Activated CD4-positive, alpha-beta T cell treated with anti-CD3 and anti-CD28 coated beads for 36 hours (primary cell): ENCODE measurements at regions of chr2 and their contacts with region 1.

Region 1: DNA sequence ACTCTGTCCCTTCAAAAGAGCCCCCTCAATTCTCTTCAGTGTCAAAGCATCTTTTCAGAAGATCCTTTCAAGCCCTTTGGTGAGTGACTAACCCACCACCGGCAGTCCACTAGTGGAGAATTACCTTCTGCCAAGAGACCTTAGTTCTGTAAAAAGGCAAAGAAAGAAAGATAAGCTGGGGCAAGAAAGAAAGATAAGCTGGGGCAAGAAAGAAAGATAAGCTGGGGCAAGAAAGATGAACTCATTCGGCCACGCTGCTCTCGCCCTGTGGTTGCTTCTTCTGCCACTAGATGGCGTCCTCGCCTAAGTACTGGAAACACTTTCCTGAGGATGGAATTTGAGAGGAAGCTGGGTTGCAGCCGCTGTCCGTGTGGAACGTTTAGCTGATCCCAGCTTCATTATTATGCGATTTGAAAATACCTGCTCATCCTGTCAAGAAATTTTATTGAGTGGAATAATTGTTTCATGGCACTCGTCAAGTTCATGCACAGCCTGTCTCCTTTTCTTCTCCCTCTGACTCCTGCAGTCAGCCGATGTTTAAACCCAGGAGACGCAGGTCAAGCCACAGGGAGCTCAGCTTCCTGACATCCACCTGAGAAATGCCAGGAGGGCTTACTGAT is 17.3 kb upstream of the ANXA4 start:
- DNase-seq: peak; percentile 92
- ATAC-seq: peak; percentile 92
- H3K4me3 Mint-ChIP-seq: peak overlapping the region; percentile 47
- H3K27ac Mint-ChIP-seq: peak overlapping the region; percentile 20
- H3K4me1 Mint-ChIP-seq: peaks cover 4% of the 10 kb centered on the region
- H3K27me3 Mint-ChIP-seq: no peaks in the 10 kb centered on the region

Region 2: DNA sequence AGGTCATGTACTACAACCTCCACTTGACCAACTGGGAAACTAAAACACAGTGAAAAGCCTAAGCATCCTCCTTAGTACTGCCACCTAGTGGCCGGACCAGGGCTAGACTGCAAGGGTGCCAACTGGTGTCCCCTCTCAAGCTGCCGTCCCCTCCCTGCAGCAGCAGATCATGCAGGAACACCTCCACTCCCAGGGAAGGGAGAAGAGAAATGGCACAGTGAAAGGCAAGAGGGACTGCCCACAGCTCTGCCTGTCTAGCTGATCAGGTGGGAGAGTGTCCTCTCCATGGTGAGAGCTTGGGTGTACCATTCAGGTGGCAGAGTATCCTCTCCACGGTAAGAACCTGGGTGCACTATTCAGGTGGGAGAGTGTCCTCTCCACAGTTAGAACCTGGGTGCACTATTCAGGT is 159.2 kb before region 1 on chr2:
- CTCF ChIA-PET with region 1: interaction called, 17 read pairs
- POLR2A ChIA-PET with region 1: no interaction called
- intact Hi-C with region 1: no loop called
- DNase-seq: peak; percentile 83
- ATAC-seq: peak; percentile 78
- H3K4me3 Mint-ChIP-seq: no peak overlapping the region
- H3K27ac Mint-ChIP-seq: peak overlapping the region; percentile 52
- H3K4me1 Mint-ChIP-seq: peaks cover 93% of the 10 kb centered on the region
- H3K27me3 Mint-ChIP-seq: no peaks in the 10 kb centered on the region

Region 3: GRCh38 chr2:69770193-69771146 is 45.8 kb after region 1 on chr2:
- CTCF ChIA-PET with region 1: interaction called, 11 read pairs
- POLR2A ChIA-PET with region 1: no interaction called
- intact Hi-C with region 1: no loop called
- DNase-seq: peak; percentile 37
- ATAC-seq: peak; percentile 28
- H3K4me3 Mint-ChIP-seq: no peak overlapping the region
- H3K27ac Mint-ChIP-seq: peak overlapping the region; percentile 38
- H3K4me1 Mint-ChIP-seq: peaks cover 49% of the 10 kb centered on the region
- H3K27me3 Mint-ChIP-seq: no peaks in the 10 kb centered on the region

Region 4: DNA sequence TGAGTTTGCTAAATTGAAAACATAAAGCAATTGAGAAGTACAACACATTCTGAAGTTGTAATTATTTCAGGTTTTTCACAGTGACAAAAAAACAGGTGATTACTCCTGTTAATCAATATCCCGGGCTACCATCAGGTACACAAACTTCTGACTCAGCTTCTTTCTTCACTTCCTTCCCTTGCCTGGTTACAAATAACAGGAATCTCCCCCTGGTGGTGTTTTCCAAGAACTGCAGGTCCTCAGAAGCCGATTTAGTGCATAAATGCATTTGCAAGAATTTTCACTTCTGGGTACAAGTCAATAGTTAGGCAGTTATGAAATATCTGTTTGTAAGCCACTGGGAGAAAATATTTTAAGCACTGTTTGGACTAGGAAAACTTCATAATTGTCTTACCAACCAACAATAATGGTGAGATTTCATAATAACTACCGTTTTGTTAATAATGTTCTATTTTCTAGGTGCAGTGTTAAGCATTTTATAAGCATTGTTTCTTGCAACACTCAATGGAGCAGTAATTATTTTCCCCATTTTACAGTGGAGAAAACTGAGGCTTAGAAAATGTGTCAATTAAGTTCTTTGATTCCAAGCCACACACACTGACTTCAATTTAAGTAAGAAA is 92.4 kb after region 1 on chr2:
- CTCF ChIA-PET with region 1: interaction called, 395 read pairs
- POLR2A ChIA-PET with region 1: interaction called, 3 read pairs
- intact Hi-C with region 1: loop called (anchors 1 kb)
- DNase-seq: peak; percentile 82
- ATAC-seq: peak; percentile 74
- H3K4me3 Mint-ChIP-seq: no peak overlapping the region
- H3K27ac Mint-ChIP-seq: no peak overlapping the region
- H3K4me1 Mint-ChIP-seq: peaks cover 4% of the 10 kb centered on the region
- H3K27me3 Mint-ChIP-seq: no peaks in the 10 kb centered on the region

Region 5: GRCh38 chr2:69863298-69863697 is 138.6 kb after region 1 on chr2:
- CTCF ChIA-PET with region 1: interaction called, 12 read pairs
- POLR2A ChIA-PET with region 1: no interaction called
- intact Hi-C with region 1: no loop called
- DNase-seq: no peak
- ATAC-seq: no peak
- H3K4me3 Mint-ChIP-seq: no peak overlapping the region
- H3K27ac Mint-ChIP-seq: no peak overlapping the region
- H3K4me1 Mint-ChIP-seq: no peaks in the 10 kb centered on the region
- H3K27me3 Mint-ChIP-seq: no peaks in the 10 kb centered on the region

Region 6: DNA sequence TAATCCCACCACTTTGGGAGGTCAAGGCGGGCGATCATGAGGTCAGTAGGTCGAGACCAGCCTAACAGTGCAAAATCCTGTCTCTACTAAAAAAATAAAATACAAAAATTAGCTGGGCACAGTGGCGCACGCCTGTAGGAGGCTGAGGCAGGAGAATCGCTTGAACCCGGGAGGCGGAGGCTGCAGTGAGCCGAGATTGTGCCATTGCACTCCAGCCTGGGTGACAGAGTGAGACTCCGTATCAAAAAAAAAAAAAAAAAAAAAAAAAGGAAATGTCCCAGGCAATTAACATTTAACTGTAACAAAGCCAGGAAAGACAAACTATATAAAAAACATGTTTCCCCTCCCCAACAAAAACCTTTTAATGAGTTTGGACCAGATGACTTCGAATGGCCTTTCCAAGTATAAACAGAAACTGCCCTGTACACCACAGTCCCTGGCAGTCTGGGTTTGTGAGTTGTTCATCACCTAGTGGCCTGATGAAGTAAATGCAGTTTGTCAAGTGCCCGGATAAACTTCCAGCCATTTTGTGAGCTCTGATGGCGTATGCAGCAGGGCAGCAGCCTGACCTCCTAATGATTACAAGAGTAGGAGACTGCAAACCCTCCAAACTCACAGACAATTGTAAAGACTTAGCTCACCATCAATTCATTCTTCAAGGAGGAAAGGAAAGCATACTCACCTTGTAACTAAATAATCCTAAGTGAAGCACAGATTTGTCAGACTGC is 346.1 kb after region 1 on chr2:
- CTCF ChIA-PET with region 1: interaction called, 3 read pairs
- POLR2A ChIA-PET with region 1: no interaction called
- intact Hi-C with region 1: loop called in 1 of 2 experiments (anchors 10 kb)
- DNase-seq: peak; percentile 73
- ATAC-seq: peak; percentile 60
- H3K4me3 Mint-ChIP-seq: peak overlapping the region; percentile 48
- H3K27ac Mint-ChIP-seq: peak overlapping the region; percentile 94
- H3K4me1 Mint-ChIP-seq: peaks cover 51% of the 10 kb centered on the region
- H3K27me3 Mint-ChIP-seq: no peaks in the 10 kb centered on the region